ENCODE measurements at regions of chr14 and their contacts with region 1.

Region 1: DNA sequence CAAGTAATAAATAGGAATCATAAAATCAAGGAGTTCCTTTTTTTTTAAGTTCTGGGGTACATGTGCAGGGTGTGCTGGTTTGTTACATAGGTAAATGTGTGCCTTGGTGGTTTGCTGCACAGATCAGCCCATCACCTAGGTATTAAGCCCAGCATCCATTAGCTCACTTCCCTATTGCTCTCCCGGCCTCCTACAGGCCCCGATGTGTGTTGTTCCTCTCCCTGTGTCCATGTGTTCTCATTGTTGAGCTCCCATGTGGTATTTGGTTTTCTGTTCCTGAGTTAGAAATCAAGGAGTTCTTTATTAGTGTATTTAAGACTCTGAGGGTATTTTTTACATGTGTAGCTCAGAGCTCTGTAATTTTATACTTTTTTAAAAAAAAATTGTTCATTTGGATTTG is 86.0 kb downstream of the SCFD1 start:
- DNase-seq: peak in 1 of 2 experiments; percentile 2
- H3K4me3 ChIP-seq: no peak overlapping the region
- H3K4me3 Mint-ChIP-seq: no peak overlapping the region
- H3K27ac Mint-ChIP-seq: no peak overlapping the region
- H3K4me1 ChIP-seq: no peaks in the 10 kb centered on the region
- H3K4me1 Mint-ChIP-seq: no peaks in the 10 kb centered on the region
- H3K27me3 ChIP-seq: no peaks in the 10 kb centered on the region
- H3K27me3 Mint-ChIP-seq: no peaks in the 10 kb centered on the region
- CTCF ChIP-seq: peak in 1 of 2 experiments; percentile 5

Region 2: DNA sequence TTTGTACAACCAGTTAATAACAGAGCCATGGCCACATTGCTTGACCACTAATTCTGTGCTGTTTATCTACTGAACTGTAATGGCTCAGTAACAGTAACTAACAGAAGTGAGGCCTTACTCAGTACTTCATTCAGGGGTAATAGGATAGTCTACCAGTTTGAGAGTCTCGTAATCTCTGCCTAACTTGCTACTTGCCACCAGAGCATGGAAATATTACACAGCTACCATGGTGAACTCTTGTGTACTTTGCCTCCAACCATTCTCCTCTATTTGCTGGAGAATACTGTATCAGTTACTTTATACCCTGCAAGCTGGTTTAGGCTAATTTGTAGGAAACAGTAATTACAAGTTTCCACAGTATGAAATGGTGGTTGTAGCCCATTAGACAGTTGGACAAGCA is 75.4 kb before region 1 on chr14:
- CTCF ChIA-PET with region 1: no interaction called
- POLR2A ChIA-PET with region 1: interaction called, 10 read pairs
- intact Hi-C with region 1: no loop called
- DNase-seq: no peak
- H3K4me3 ChIP-seq: no peak overlapping the region
- H3K4me3 Mint-ChIP-seq: no peak overlapping the region
- H3K27ac Mint-ChIP-seq: no peak overlapping the region
- H3K4me1 ChIP-seq: peaks cover 3% of the 10 kb centered on the region; the same call in 1 of the 2 replicates
- H3K4me1 Mint-ChIP-seq: no peaks in the 10 kb centered on the region
- H3K27me3 ChIP-seq: no peaks in the 10 kb centered on the region
- H3K27me3 Mint-ChIP-seq: no peaks in the 10 kb centered on the region
- CTCF ChIP-seq: no peak

Region 3: DNA sequence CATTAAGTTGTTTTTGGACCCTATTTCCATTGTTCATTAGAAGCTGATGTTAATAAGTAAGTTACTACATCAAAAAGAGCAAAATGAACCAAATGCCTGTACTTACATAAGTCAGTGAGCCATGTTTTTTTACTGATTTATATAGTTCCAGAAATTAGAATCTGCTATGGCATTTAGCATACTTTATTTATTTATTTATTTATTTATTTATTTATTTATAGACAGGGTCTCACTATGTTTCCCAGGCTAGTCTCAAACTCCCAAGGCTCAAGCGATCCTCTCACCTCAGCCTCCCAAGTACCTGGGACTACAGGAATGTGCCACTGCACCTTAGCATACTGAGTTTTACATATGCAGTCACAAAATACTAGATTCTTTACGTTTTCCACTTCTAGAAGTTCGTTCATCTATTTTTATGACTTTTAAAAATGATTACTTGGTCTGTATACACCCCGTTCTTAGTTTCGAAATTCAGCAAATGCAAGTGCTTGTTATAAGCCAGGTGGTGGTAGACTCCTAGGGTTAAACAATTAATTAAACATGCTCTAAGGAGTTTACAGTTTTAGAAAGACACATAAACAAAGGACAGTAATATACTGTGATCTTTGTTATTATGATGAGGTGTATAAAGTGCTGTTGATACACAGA is 16.3 kb before region 1 on chr14:
- CTCF ChIA-PET with region 1: no interaction called
- POLR2A ChIA-PET with region 1: no interaction called
- intact Hi-C with region 1: no loop called
- DNase-seq: no peak
- H3K4me3 ChIP-seq: no peak overlapping the region
- H3K4me3 Mint-ChIP-seq: no peak overlapping the region
- H3K27ac Mint-ChIP-seq: no peak overlapping the region
- H3K4me1 ChIP-seq: no peaks in the 10 kb centered on the region
- H3K4me1 Mint-ChIP-seq: no peaks in the 10 kb centered on the region
- H3K27me3 ChIP-seq: no peaks in the 10 kb centered on the region
- H3K27me3 Mint-ChIP-seq: no peaks in the 10 kb centered on the region
- CTCF ChIP-seq: no peak

Region 4: GRCh38 chr14:30957813-30958370 is 249.7 kb after region 1 on chr14:
- CTCF ChIA-PET with region 1: no interaction called
- POLR2A ChIA-PET with region 1: no interaction called
- intact Hi-C with region 1: no loop called
- DNase-seq: no peak
- H3K4me3 ChIP-seq: no peak overlapping the region
- H3K4me3 Mint-ChIP-seq: no peak overlapping the region
- H3K27ac Mint-ChIP-seq: no peak overlapping the region
- H3K4me1 ChIP-seq: 0 out of 2 replicates have a peak, but pooled peaks cover 3% of the 10 kb centered on the region
- H3K4me1 Mint-ChIP-seq: peaks cover 19% of the 10 kb centered on the region
- H3K27me3 ChIP-seq: no peaks in the 10 kb centered on the region
- H3K27me3 Mint-ChIP-seq: no peaks in the 10 kb centered on the region
- CTCF ChIP-seq: no peak